ENCODE measurements at regions of chr3 and their contacts with region 1.

Region 1: GRCh38 chr3:143972505-143973255 is 1.1 kb downstream of the DIPK2A start:
- DNase-seq: peak; percentile 50 to 60
- ATAC-seq: peak; percentile 38 to 49
- H3K4me3 ChIP-seq: peak overlapping the region; percentile 85 to 94 (median 89)
- H3K27ac ChIP-seq: peak overlapping the region; percentile 92 to 97 (median 94)
- H3K4me1 ChIP-seq: peaks cover 30 to 38% of the 10 kb centered on the region in 2 donors
- H3K27me3 ChIP-seq: no peaks in the 10 kb centered on the region
- CTCF ChIP-seq: peak in 2 of 5 experiments; percentile 46 to 52
- POLR2A ChIP-seq: no peak

Region 2: GRCh38 chr3:143775459-143775858 is 197.2 kb before region 1 on chr3:
- in situ Hi-C with region 1: loop called in 2 of 4 experiments (anchors 25 kb)
- intact Hi-C with region 1: no loop called
- DNase-seq: no peak
- ATAC-seq: peak in 1 of 2 donors; percentile 70
- H3K4me3 ChIP-seq: peak overlapping the region in 2 of 4 donors; percentile 5 to 33
- H3K27ac ChIP-seq: no peak overlapping the region
- H3K4me1 ChIP-seq: no peaks in the 10 kb centered on the region
- H3K27me3 ChIP-seq: no peaks in the 10 kb centered on the region
- CTCF ChIP-seq: peak in 4 of 5 experiments; percentile 9 to 57 (median 31)
- POLR2A ChIP-seq: no peak

Region 3: GRCh38 chr3:143847787-143848631 is 124.7 kb before region 1 on chr3 and contains the start of gene SLC9A9:
- in situ Hi-C with region 1: no loop called
- intact Hi-C with region 1: loop called (anchors 2 kb)
- DNase-seq: peak; percentile 29 to 30
- ATAC-seq: peak; percentile 89 to 90
- H3K4me3 ChIP-seq: peak within 1 kb of the TSS; percentile 63 to 71 (median 66)
- H3K27ac ChIP-seq: peak within 1 kb of the TSS; percentile 3 to 68 (median 62)
- H3K4me1 ChIP-seq: peaks cover 20 to 34% of the 10 kb centered on the region in 2 donors
- H3K27me3 ChIP-seq: no peaks in the 10 kb centered on the region
- CTCF ChIP-seq: no peak
- POLR2A ChIP-seq: no peak
- total RNA-seq, gene SLC9A9: 1.7 to 8.2 (median 3.6) TPM

Region 4: DNA sequence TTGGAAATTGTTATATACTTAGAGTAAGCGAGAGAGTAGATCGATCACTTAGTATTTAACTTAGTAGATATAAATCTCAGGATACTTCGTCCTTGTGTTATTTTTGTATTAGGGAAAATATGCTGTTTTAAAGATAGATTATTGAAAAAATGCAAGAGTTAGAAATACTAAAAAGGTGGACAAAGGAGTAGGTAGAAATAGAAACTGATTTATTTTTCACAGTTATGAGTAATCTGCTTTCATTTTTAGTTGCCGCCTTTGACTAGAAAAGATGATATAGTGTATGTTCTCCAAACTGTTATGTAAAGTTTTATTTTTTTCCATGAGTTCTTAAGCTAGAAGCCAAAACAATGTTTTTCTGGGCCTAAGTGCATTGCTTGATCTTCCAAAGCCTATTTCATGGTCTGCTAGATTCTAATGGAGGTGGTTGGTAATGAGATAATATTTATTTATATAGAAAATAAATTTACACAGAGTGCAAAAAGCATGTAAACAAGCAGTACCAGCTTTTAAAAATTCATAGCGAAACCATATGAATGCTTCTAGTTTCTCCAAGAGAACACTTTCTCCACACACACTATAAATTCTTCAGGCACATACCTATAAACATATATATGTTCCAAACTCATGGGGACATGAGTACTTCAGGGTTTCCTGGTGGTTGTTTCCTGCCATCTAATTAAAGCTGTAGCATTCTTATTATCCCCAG is 60.0 kb after region 1 on chr3:
- in situ Hi-C with region 1: no loop called
- intact Hi-C with region 1: loop called (anchors 5 kb)
- DNase-seq: no peak
- ATAC-seq: no peak
- H3K4me3 ChIP-seq: peak overlapping the region in 1 of 4 donors; percentile 8
- H3K27ac ChIP-seq: no peak overlapping the region
- H3K4me1 ChIP-seq: peaks cover 0 to 4% of the 10 kb centered on the region in 2 donors
- H3K27me3 ChIP-seq: no peaks in the 10 kb centered on the region
- CTCF ChIP-seq: no peak
- POLR2A ChIP-seq: no peak

Region 5: GRCh38 chr3:144770915-144771351 is 798.3 kb after region 1 on chr3:
- in situ Hi-C with region 1: no loop called
- intact Hi-C with region 1: loop called (anchors 10 kb)
- DNase-seq: no peak
- ATAC-seq: peak; percentile 61 to 69
- H3K4me3 ChIP-seq: no peak overlapping the region
- H3K27ac ChIP-seq: peak overlapping the region in 1 of 4 donors; percentile 60
- H3K4me1 ChIP-seq: peaks cover 32 to 42% of the 10 kb centered on the region in 2 donors
- H3K27me3 ChIP-seq: no peaks in the 10 kb centered on the region
- CTCF ChIP-seq: peak in 2 of 5 experiments; percentile 10 to 23
- POLR2A ChIP-seq: no peak

Region 6: DNA sequence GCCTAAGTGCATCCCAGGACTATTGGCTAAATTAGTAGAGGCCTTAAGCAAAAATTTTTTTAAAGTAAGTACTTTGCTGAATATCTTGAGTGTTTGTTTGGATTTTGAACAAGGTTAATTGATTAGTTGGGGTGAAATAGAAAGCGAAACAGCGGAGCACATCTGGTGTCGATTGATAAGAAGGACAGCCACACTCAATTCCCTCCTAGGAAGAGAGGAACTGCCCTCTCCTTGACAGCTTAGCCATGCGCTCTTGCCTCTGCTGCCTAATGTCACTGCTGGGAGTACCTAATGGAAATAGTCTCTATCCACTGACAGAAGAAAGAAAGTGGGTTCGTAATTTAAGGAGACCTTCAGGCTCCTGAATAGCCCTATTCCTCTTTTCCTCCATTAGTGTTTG is 942.5 kb after region 1 on chr3:
- in situ Hi-C with region 1: no loop called
- intact Hi-C with region 1: no loop called
- DNase-seq: no peak
- ATAC-seq: no peak
- H3K4me3 ChIP-seq: no peak overlapping the region
- H3K27ac ChIP-seq: no peak overlapping the region
- H3K4me1 ChIP-seq: no peaks in the 10 kb centered on the region
- H3K27me3 ChIP-seq: no peaks in the 10 kb centered on the region
- CTCF ChIP-seq: no peak
- POLR2A ChIP-seq: no peak